Naive thymus-derived CD4-positive, alpha-beta T cell (primary cell): ENCODE measurements at regions of chr1 and their contacts with region 1.

Region 1: GRCh38 chr1:9292361-9293240 is at the start of gene SPSB1:
- DNase-seq: peak; percentile 30 to 66 (median 56)
- ATAC-seq: peak; percentile 81
- H3K4me3 ChIP-seq: peak within 1 kb of the TSS; percentile 55
- H3K4me3 Mint-ChIP-seq: peak within 1 kb of the TSS; percentile 34 to 86 (median 66)
- H3K27ac ChIP-seq: peak within 1 kb of the TSS; percentile 27
- H3K27ac Mint-ChIP-seq: peak within 1 kb of the TSS in 8 of 9 donors; percentile 21 to 81 (median 52)
- H3K4me1 ChIP-seq: peaks cover 6 to 19% of the 10 kb centered on the region in 2 donors
- H3K4me1 Mint-ChIP-seq: peaks cover 6 to 40% (median 32%) of the 10 kb centered on the region in 7 donors
- H3K27me3 ChIP-seq: no peaks in the 10 kb centered on the region
- H3K27me3 Mint-ChIP-seq: no peaks in the 10 kb centered on the region
- total RNA-seq, gene SPSB1: 1.8 to 10.3 (median 1.9) TPM

Region 2: DNA sequence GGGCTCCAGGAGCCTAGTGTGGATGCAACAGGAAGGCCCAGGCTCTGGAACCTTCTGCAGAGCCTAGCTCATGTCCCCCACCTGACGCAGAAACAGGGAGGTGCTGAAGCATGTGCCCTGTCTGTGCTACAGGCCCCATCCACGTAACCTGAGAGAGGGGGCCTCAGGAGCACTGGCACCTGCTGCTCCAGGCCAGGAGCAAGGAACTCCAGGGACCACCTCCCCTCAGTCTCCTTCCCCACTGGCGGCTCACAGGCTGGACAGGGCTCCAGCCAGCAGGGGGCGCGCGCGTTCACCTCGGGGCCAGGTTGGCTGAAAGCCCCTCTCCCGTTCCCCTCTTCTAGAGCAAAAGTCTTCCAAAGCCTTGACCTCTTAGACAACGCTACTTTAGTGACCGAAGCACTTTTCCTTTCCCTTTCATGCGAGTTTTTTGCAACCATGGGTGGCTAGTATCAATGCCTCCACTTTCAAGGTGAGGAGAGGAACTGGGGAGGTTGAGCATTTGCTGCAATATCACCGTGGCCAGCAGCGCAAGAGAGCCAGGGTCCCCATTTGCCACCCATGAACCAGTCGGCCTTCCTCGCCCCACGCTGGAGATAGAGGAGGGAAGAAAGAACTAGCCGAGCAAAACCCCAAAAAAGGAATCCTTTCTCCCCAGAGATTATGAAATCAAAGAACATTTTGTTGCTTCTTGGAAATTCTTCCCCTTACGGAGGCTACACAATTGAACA is 111.3 kb before region 1 on chr1:
- CTCF ChIA-PET with region 1: no interaction called
- POLR2A ChIA-PET with region 1: no interaction called
- intact Hi-C with region 1: loop called in 1 of 2 experiments (anchors 5 kb)
- DNase-seq: peak; percentile 34 to 89 (median 64)
- ATAC-seq: peak; percentile 71
- H3K4me3 ChIP-seq: peak overlapping the region; percentile 11
- H3K4me3 Mint-ChIP-seq: peak overlapping the region; percentile 69 to 96 (median 81)
- H3K27ac ChIP-seq: no peak overlapping the region
- H3K27ac Mint-ChIP-seq: peak overlapping the region in 1 of 9 donors; percentile 93
- H3K4me1 ChIP-seq: peaks cover 5% of the 10 kb centered on the region in 2 donors
- H3K4me1 Mint-ChIP-seq: peaks cover 0 to 25% (median 7%) of the 10 kb centered on the region in 7 donors
- H3K27me3 ChIP-seq: no peaks in the 10 kb centered on the region
- H3K27me3 Mint-ChIP-seq: peaks cover 11 to 31% (median 17%) of the 10 kb centered on the region in 5 donors

Region 3: GRCh38 chr1:9234223-9235095 is 58.1 kb before region 1 on chr1 and contains the start of gene H6PD:
- CTCF ChIA-PET with region 1: no interaction called
- POLR2A ChIA-PET with region 1: interaction called, 3 read pairs
- intact Hi-C with region 1: loop called (anchors 2 to 5 kb)
- DNase-seq: peak; percentile 60 to 88 (median 74)
- ATAC-seq: peak; percentile 88
- H3K4me3 ChIP-seq: peak within 1 kb of the TSS; percentile 74
- H3K4me3 Mint-ChIP-seq: peak within 1 kb of the TSS; percentile 83 to 97 (median 96)
- H3K27ac ChIP-seq: peak within 1 kb of the TSS; percentile 86
- H3K27ac Mint-ChIP-seq: peak within 1 kb of the TSS; percentile 91 to 99 (median 98)
- H3K4me1 ChIP-seq: peaks cover 14 to 23% of the 10 kb centered on the region in 2 donors
- H3K4me1 Mint-ChIP-seq: peaks cover 19 to 44% (median 36%) of the 10 kb centered on the region in 7 donors
- H3K27me3 ChIP-seq: no peaks in the 10 kb centered on the region
- H3K27me3 Mint-ChIP-seq: no peaks in the 10 kb centered on the region
- total RNA-seq, gene H6PD: 18.6 to 27.6 (median 19.8) TPM

Region 4: DNA sequence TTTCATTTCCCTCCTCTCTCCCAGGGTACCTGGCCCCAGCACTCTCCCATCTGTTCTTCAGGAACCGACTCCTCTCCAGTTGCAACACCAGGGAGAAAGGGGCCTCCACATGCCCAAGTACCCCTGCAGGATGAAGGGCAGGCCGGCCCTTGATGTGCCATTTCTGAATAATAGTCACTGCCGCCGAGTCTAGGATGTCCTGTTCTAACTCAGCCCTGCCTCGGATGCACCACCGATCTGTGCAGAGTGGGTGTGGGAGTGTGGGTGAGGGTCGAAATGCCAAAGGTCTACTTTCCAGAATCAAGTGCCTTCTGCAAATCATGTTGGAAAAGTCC is 25.3 kb before region 1 on chr1:
- CTCF ChIA-PET with region 1: interaction called, 5 read pairs
- POLR2A ChIA-PET with region 1: no interaction called
- intact Hi-C with region 1: loop called in 1 of 2 experiments (anchors 2 kb)
- DNase-seq: no peak
- ATAC-seq: no peak
- H3K4me3 ChIP-seq: no peak overlapping the region
- H3K4me3 Mint-ChIP-seq: no peak overlapping the region
- H3K27ac ChIP-seq: no peak overlapping the region
- H3K27ac Mint-ChIP-seq: peak overlapping the region in 2 of 9 donors; percentile 69 to 89
- H3K4me1 ChIP-seq: no peaks in the 10 kb centered on the region
- H3K4me1 Mint-ChIP-seq: peaks cover 3 to 12% (median 5%) of the 10 kb centered on the region in 7 donors
- H3K27me3 ChIP-seq: no peaks in the 10 kb centered on the region
- H3K27me3 Mint-ChIP-seq: no peaks in the 10 kb centered on the region

Region 5: DNA sequence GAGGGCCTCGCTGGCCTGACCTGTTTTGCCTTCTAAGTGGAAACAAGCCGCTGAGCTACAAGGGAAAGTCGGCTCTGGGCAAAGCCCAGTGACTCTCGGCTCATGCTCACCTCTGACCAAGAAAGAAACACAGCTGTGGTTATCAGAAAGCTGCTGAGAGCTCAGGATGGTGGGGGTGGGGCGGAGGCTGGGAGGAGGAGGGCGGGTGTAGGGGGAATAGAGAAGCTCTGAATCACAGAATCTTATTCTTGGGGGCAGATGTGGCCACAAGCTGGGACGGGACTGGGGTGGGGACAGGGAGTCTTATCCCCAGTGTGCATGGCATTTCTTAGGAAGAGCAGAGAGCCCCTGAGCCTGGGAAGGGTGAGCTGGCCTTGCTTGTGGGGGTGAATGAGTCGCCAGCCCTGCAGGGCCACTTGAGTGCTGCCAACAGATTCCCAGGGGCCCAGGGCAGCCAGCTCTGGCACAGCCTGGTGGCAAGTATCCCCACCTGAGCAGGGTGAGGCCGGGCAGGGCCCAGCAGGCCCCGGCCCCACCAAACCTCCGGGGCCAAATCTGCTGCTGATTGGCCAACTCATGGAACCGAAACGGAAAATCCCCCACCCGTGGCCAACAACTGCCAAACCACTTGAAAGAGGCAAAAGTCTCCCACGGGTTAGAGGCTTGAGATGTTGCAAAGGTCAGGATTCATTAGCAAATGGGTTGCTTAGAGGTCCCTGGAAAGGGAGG is 120.7 kb after region 1 on chr1:
- CTCF ChIA-PET with region 1: no interaction called
- POLR2A ChIA-PET with region 1: no interaction called
- intact Hi-C with region 1: loop called in 1 of 2 experiments (anchors 5 kb)
- DNase-seq: peak in 2 of 9 donors; percentile 19 to 65
- ATAC-seq: peak; percentile 69
- H3K4me3 ChIP-seq: peak overlapping the region; percentile 16
- H3K4me3 Mint-ChIP-seq: peak overlapping the region in 8 of 10 donors; percentile 25 to 64 (median 46)
- H3K27ac ChIP-seq: no peak overlapping the region
- H3K27ac Mint-ChIP-seq: peak overlapping the region in 3 of 9 donors; percentile 10 to 50 (median 43)
- H3K4me1 ChIP-seq: peaks cover 19 to 37% of the 10 kb centered on the region in 2 donors
- H3K4me1 Mint-ChIP-seq: peaks cover 15 to 59% (median 51%) of the 10 kb centered on the region in 7 donors
- H3K27me3 ChIP-seq: no peaks in the 10 kb centered on the region
- H3K27me3 Mint-ChIP-seq: peaks cover 0 to 19% (median 0%) of the 10 kb centered on the region in 5 donors

Region 6: GRCh38 chr1:9455487-9456234 is 163.1 kb after region 1 on chr1:
- CTCF ChIA-PET with region 1: interaction called, 90 read pairs
- POLR2A ChIA-PET with region 1: interaction called, 3 read pairs
- intact Hi-C with region 1: loop called (anchors 1 kb)
- DNase-seq: peak; percentile 26 to 70 (median 58)
- ATAC-seq: peak; percentile 76
- H3K4me3 ChIP-seq: no peak overlapping the region
- H3K4me3 Mint-ChIP-seq: no peak overlapping the region
- H3K27ac ChIP-seq: no peak overlapping the region
- H3K27ac Mint-ChIP-seq: peak overlapping the region in 1 of 9 donors; percentile 48
- H3K4me1 ChIP-seq: no peaks in the 10 kb centered on the region
- H3K4me1 Mint-ChIP-seq: no peaks in the 10 kb centered on the region
- H3K27me3 ChIP-seq: no peaks in the 10 kb centered on the region
- H3K27me3 Mint-ChIP-seq: peaks cover 0 to 22% (median 0%) of the 10 kb centered on the region in 5 donors

Region 7: DNA sequence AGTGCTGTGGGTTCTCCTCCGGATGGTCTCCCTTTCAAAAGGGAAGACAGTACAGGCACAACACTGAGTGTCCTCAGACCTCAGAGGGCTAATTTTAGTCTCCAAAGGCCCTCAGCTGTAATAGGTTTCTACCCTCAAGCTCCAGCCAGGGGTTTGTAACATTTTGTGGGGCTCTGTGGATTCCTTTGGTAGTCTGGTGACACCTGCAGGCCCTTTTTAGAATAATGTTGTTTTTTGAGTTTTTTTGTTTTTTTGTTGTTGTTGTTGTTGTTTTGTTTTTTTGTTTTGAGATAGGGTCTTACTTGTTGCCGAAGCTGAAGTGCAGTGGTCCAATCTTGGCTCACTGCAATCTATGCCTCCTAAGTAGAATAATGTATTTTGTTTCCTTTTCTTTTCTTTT is 281.1 kb after region 1 on chr1:
- CTCF ChIA-PET with region 1: no interaction called
- POLR2A ChIA-PET with region 1: no interaction called
- intact Hi-C with region 1: loop called in 1 of 2 experiments (anchors 5 kb)
- DNase-seq: peak in 3 of 9 donors; percentile 29 to 44 (median 33)
- ATAC-seq: no peak
- H3K4me3 ChIP-seq: no peak overlapping the region
- H3K4me3 Mint-ChIP-seq: no peak overlapping the region
- H3K27ac ChIP-seq: no peak overlapping the region
- H3K27ac Mint-ChIP-seq: peak overlapping the region in 2 of 9 donors; percentile 23 to 36
- H3K4me1 ChIP-seq: no peaks in the 10 kb centered on the region
- H3K4me1 Mint-ChIP-seq: no peaks in the 10 kb centered on the region
- H3K27me3 ChIP-seq: no peaks in the 10 kb centered on the region
- H3K27me3 Mint-ChIP-seq: no peaks in the 10 kb centered on the region

Region 8: DNA sequence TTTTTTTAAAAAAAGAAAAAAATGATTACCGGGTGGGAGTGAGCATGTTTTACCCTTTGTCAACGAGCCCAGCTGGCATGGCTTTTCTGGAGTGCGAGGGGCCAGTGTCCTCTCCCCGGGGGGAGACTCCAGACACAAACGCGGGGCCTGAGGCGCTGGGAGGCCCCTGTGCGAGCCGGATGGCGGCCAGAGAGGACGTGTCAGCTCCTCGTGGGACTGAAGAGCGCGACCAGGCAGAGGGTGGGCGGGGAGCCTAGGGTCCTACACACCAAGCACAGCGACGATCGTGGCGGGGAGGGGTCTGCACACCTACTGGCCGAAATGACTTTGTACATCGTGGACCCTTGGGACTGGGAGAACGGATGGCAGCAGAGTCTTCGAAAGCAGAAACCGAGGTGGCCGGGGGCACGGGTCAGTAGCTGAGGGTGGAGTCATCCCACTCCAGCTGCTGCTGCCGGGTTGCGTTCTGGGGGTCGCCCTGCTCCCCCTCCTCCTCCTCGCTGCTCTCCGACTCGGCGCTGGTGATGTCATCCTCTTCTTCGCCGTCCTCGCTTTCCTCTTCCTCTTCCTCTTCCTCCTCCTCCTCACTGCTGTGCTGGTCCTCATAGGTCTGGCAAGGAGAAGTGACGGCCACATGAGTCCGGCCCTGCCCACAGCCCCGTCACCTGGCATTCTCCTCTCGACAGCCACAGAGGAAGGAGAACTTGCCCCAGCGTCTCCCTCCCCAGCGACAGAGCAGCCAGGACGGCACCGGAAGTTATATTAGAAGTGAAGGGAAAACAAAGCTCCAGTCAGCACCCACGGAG is 437.7 kb after region 1 on chr1:
- CTCF ChIA-PET with region 1: no interaction called
- POLR2A ChIA-PET with region 1: no interaction called
- intact Hi-C with region 1: no loop called
- DNase-seq: no peak
- ATAC-seq: peak; percentile 49
- H3K4me3 ChIP-seq: no peak overlapping the region
- H3K4me3 Mint-ChIP-seq: peak overlapping the region; percentile 1 to 80 (median 70)
- H3K27ac ChIP-seq: no peak overlapping the region
- H3K27ac Mint-ChIP-seq: peak overlapping the region; percentile 70 to 94 (median 91)
- H3K4me1 ChIP-seq: peaks cover 23 to 54% of the 10 kb centered on the region in 2 donors
- H3K4me1 Mint-ChIP-seq: peaks cover 37 to 82% (median 65%) of the 10 kb centered on the region in 7 donors
- H3K27me3 ChIP-seq: no peaks in the 10 kb centered on the region
- H3K27me3 Mint-ChIP-seq: no peaks in the 10 kb centered on the region

Region 9: GRCh38 chr1:10225573-10225972 is 933.0 kb after region 1 on chr1:
- CTCF ChIA-PET with region 1: no interaction called
- POLR2A ChIA-PET with region 1: no interaction called
- intact Hi-C with region 1: no loop called
- DNase-seq: no peak
- ATAC-seq: no peak
- H3K4me3 ChIP-seq: no peak overlapping the region
- H3K4me3 Mint-ChIP-seq: no peak overlapping the region
- H3K27ac ChIP-seq: no peak overlapping the region
- H3K27ac Mint-ChIP-seq: no peak overlapping the region
- H3K4me1 ChIP-seq: no peaks in the 10 kb centered on the region
- H3K4me1 Mint-ChIP-seq: peaks cover 0 to 12% (median 0%) of the 10 kb centered on the region in 7 donors
- H3K27me3 ChIP-seq: no peaks in the 10 kb centered on the region
- H3K27me3 Mint-ChIP-seq: no peaks in the 10 kb centered on the region